Head of caudate nucleus (tissue), 42 donors: ENCODE measurements at regions of chr14 and their contacts with region 1.

Region 1: GRCh38 chr14:32469388-32470160 is 140.5 kb downstream of the AKAP6 start:
- DNase-seq: no peak

Region 2: DNA sequence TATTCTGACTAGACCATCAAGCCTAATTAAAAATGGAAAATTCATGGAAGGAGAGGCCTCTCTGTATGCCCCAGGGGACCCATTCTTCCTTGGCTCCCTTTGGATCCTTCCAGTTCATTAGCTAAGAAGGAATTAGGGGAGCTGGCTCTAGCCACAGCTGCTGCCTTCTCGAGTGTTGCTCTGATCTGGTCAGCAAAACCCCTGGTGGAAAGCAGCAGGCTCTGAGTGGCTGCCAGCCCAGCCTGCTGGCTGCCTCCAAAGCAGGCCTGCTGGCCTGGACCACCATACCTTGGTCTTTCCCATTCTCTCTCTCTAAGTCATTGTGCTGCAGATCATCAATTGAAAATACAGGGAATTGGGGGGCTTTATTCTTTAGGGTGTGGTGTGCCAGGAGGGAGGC is 169.4 kb before region 1 on chr14:
- intact Hi-C with region 1: no loop called
- DNase-seq: peak in 2 of 42 donors; percentile 8 to 11

Region 3: GRCh38 chr14:32509632-32510187 is 40.1 kb after region 1 on chr14:
- intact Hi-C with region 1: loop called (anchors 5 kb)
- DNase-seq: peak; percentile 56 to 96 (median 86)